ENCODE measurements at regions of chr6 and their contacts with region 1.

Region 1: DNA sequence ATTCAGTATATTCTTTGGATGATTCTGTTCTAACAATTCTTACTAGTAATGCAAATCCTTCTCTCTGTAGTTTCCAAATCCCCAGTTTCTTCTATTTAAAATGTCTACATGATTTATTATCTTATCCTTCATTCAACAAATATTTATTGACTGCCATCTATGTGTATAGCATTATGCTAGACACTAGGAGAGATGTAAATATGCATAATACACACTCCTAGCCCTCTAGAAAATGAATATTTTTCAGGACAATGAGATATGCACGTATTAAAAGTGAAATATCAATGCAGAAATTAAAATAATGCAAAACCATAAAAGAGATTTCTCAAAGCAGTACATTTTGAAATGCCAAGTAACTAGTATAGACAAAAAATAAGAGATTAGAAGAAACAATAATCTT is 293.5 kb upstream of the CNR1 start:
- DNase-seq: no peak
- ATAC-seq: no peak
- H3K4me3 ChIP-seq: no peak overlapping the region
- H3K27ac ChIP-seq: no peak overlapping the region
- H3K4me1 ChIP-seq: no peaks in the 10 kb centered on the region
- H3K27me3 ChIP-seq: peaks cover 0 to 4% of the 10 kb centered on the region in 2 experiments; a peak in 1 of 5 replicates
- CTCF ChIP-seq: no peak
- EP300 ChIP-seq: no peak
- POLR2A ChIP-seq: no peak
- RAD21 ChIP-seq: no peak

Region 2: DNA sequence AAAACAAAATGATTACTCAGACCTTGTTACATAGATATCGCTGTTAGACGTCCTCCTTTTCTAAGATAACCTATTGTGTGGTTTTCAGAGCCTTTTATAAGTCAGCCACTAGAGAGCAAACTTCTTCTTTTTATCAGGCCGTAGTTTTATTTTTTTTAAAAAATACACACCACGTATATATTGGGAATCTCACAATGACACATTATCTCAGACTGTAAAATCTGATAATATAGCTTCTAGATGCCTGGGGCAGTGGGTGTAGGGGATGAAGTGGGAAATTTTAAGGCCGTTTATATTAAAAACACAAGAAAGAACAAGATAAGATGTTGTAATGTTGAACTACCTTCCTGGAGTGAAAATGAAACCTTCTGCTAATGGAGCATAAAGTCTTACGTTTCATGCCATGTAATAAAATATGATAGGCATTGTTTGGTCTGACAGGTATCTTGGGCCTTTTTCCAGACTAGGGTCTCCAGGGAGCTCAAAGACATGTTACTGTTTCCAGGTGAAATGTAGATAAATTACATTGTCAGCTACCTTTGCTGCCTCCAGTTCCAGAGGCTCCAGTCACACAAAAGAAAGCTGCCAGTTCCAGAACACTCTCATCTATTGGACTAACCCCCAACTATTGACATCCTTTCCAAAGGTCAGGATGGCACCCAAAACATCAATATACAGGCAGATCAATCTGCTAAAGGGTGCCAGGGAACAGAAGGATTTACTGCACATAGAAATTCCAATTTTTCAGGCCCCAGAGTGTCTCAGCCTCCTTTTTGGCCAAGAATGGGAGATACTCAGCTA is 627.4 kb before region 1 on chr6:
- CTCF ChIA-PET with region 1: no interaction called
- POLR2A ChIA-PET with region 1: no interaction called
- in situ Hi-C with region 1: no loop called
- intact Hi-C with region 1: loop called (anchors 10 kb)
- DNase-seq: no peak
- ATAC-seq: peak; percentile 69
- H3K4me3 ChIP-seq: no peak overlapping the region
- H3K27ac ChIP-seq: no peak overlapping the region
- H3K4me1 ChIP-seq: no peaks in the 10 kb centered on the region
- H3K27me3 ChIP-seq: peaks cover 3 to 14% of the 10 kb centered on the region in 2 experiments; a peak in 2 of 5 replicates
- CTCF ChIP-seq: peak in 1 of 3 experiments; percentile 60; a peak in 2 of 6 replicates
- EP300 ChIP-seq: no peak
- POLR2A ChIP-seq: no peak
- RAD21 ChIP-seq: peak; percentile 56 to 66